ENCODE measurements at regions of chr9 and their contacts with region 1.

Region 1: DNA sequence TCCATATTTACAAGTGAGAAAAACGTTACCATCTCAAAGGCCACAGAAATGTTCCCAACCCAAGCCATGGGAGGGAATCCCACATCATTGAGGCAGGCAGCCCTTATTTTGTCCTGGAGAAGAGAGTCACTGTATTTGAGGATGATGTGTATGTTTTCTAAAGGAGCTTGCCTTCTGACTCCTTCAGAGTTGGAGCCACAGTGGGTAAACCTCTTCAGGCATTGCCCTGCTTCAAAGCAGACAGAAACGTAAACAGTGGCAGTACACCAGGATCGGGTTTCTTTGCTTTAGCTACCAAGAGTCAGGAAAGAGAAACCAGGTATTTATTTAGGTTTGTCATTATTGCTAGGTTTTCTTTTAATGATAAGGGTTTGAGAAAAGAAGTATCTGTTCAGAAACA is 45.7 kb downstream of the MUSK start:
- DNase-seq: peak; percentile 50
- ATAC-seq: peak; percentile 62
- H3K4me3 ChIP-seq: no peak overlapping the region
- H3K27ac ChIP-seq: peak overlapping the region; percentile 52; the same call in 1 of the 2 replicates
- H3K4me1 ChIP-seq: peaks cover 9% of the 10 kb centered on the region
- H3K27me3 ChIP-seq: no peaks in the 10 kb centered on the region
- CTCF ChIP-seq: no peak
- POLR2A ChIP-seq: no peak
- RAD21 ChIP-seq: no peak

Region 2: DNA sequence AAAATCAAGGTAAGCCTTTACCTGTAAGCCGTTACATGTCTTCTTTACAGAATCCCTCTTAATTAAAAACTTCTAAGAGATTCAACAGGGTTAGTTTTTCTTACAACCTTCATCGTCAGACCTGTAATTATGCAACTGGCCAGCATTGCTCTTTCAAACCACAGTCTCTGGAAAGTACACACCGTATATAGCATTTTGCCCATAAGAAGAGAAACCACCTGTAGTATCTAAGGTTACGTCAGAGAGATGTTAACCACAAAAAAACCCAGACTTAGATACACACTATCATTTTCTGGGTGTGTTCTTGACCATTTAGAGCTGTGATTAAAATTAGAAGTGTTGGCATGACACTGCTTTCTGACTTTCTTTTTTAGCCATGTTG is 94.3 kb after region 1 on chr9:
- CTCF ChIA-PET with region 1: no interaction called
- POLR2A ChIA-PET with region 1: no interaction called
- dilution Hi-C with region 1: loop called (anchors 25 kb)
- in situ Hi-C with region 1: no loop called
- intact Hi-C with region 1: no loop called
- DNase-seq: no peak
- ATAC-seq: no peak
- H3K4me3 ChIP-seq: no peak overlapping the region
- H3K27ac ChIP-seq: no peak overlapping the region
- H3K4me1 ChIP-seq: no peaks in the 10 kb centered on the region
- H3K27me3 ChIP-seq: no peaks in the 10 kb centered on the region
- CTCF ChIP-seq: no peak
- POLR2A ChIP-seq: no peak
- RAD21 ChIP-seq: no peak